Activated T-helper 1 cell treated with anti-CD3 and anti-CD28 coated beads, Interleukin-12 subunit alpha, Interleukin-12 subunit beta, Interleukin-2, Interleukin-4 antibody, amounts not matched to agents 30 ng/mL and 10 ng/mL and 1 ng/mL, durations not matched to agents 14 hours and 24 hours and 36 hours (primary cell): ENCODE measurements at regions of chrX and their contacts with region 1.

Region 1: GRCh38 chrX:150772150-150772970 is 79.2 kb downstream of the MTMR1 start:
- DNase-seq: peak; percentile 47
- H3K4me3 Mint-ChIP-seq: no peak overlapping the region
- H3K27ac Mint-ChIP-seq: no peak overlapping the region
- H3K4me1 Mint-ChIP-seq: no peaks in the 10 kb centered on the region
- H3K27me3 Mint-ChIP-seq: no peaks in the 10 kb centered on the region

Region 2: DNA sequence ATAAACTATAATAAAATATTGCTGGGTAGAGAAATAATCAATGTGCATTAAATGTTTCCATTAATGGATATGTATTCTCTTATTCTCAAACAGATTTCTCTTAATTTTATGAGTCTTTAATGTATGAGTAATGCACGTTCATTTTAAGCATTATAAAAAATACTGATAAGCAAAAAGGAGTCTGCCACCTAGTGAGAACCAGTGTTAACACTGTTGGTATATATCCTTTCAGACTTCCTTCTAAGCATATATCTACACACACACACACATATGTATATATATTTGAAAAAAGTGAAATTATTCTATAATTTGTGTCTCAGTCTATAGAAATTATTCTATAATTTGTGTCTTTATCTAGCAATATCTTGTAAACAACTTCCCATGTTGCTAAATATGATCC is 129.1 kb before region 1 on chrX:
- intact Hi-C with region 1: no loop called
- DNase-seq: no peak
- H3K4me3 Mint-ChIP-seq: no peak overlapping the region
- H3K27ac Mint-ChIP-seq: no peak overlapping the region
- H3K4me1 Mint-ChIP-seq: no peaks in the 10 kb centered on the region
- H3K27me3 Mint-ChIP-seq: no peaks in the 10 kb centered on the region

Region 3: DNA sequence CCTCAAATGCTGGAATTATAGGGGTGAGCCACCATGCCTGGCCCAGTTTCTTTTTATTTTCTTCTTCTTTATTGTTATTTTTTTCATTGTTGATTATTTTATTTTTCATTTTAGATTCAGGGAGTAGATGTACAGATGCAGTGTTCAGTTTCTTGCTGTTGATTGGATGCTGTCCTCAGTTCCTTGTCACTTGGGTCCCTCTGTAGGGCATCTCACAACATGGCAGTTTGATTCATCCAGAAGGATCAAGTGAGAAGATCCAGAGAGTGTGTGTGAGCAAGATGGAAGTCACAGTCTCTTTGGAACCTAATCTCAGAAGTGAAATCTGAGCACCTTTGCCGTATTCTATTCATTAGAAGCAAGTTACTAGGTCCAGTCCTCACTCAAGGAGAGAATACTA is 231.7 kb after region 1 on chrX:
- intact Hi-C with region 1: loop called (anchors 5 kb)
- DNase-seq: no peak
- H3K4me3 Mint-ChIP-seq: no peak overlapping the region
- H3K27ac Mint-ChIP-seq: no peak overlapping the region
- H3K4me1 Mint-ChIP-seq: no peaks in the 10 kb centered on the region
- H3K27me3 Mint-ChIP-seq: peaks cover 2% of the 10 kb centered on the region

Region 4: GRCh38 chrX:151082076-151082948 is 310.0 kb after region 1 on chrX:
- intact Hi-C with region 1: loop called (anchors 1 kb)
- DNase-seq: peak; percentile 15
- H3K4me3 Mint-ChIP-seq: no peak overlapping the region
- H3K27ac Mint-ChIP-seq: no peak overlapping the region
- H3K4me1 Mint-ChIP-seq: no peaks in the 10 kb centered on the region
- H3K27me3 Mint-ChIP-seq: peaks cover 15% of the 10 kb centered on the region